ENCODE measurements at regions of chr20 and their contacts with region 1.

Region 1: DNA sequence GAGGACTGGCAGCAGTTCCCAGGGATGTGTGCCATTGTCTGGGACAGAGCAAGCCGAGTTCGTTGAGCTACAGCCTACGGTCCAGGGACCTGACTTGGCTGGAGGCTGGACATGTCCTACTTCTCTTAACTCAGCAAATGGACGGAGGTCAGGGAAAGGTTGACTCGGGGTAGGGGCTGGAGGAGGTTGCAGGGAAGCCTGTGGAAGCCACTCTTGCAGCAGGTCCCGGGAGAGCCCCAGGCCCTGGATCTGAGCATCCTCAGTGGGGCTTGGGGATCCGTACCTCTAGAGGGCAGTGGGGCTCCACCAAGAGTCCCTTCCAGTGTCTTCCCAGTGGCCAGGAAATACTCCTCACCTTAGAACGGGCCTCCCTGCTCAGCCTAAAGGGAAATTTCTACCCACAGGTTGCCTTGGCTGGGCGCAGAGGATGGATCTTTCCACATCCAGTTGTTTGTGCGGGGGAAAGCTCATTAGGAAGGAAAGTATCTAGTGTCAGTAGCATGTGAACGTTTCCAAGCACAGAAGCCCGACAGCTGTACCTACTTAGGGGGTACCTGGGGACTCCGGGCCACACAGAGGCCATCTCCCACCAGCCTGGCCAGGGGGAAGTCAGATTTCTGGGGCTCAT is 170.2 kb downstream of the NFATC2 start:
- DNase-seq: peak; percentile 69
- ATAC-seq: peak; percentile 68
- H3K4me3 ChIP-seq: no peak overlapping the region
- H3K4me3 Mint-ChIP-seq: no peak overlapping the region
- H3K27ac ChIP-seq: no peak overlapping the region
- H3K27ac Mint-ChIP-seq: no peak overlapping the region
- H3K4me1 ChIP-seq: peaks cover 0 to 6% of the 10 kb centered on the region in 2 donors
- H3K4me1 Mint-ChIP-seq: peaks cover 3% of the 10 kb centered on the region
- H3K27me3 ChIP-seq: peaks cover 0 to 4% (median 0%) of the 10 kb centered on the region in 4 experiments
- H3K27me3 Mint-ChIP-seq: peaks cover 5% of the 10 kb centered on the region
- CTCF ChIP-seq: peak; percentile 75

Region 2: GRCh38 chr20:51450221-51450712 is 78.0 kb after region 1 on chr20:
- CTCF ChIA-PET with region 1: no interaction called
- POLR2A ChIA-PET with region 1: no interaction called
- intact Hi-C with region 1: no loop called
- DNase-seq: no peak
- ATAC-seq: no peak
- H3K4me3 ChIP-seq: no peak overlapping the region
- H3K4me3 Mint-ChIP-seq: no peak overlapping the region
- H3K27ac ChIP-seq: no peak overlapping the region
- H3K27ac Mint-ChIP-seq: no peak overlapping the region
- H3K4me1 ChIP-seq: no peaks in the 10 kb centered on the region
- H3K4me1 Mint-ChIP-seq: peaks cover 11% of the 10 kb centered on the region
- H3K27me3 ChIP-seq: no peaks in the 10 kb centered on the region
- H3K27me3 Mint-ChIP-seq: no peaks in the 10 kb centered on the region
- CTCF ChIP-seq: no peak

Region 3: GRCh38 chr20:51624157-51624731 is 252.0 kb after region 1 on chr20:
- CTCF ChIA-PET with region 1: interaction called, 89 read pairs
- POLR2A ChIA-PET with region 1: no interaction called
- intact Hi-C with region 1: loop called (anchors 1 kb)
- DNase-seq: peak; percentile 72
- ATAC-seq: peak; percentile 67
- H3K4me3 ChIP-seq: no peak overlapping the region
- H3K4me3 Mint-ChIP-seq: no peak overlapping the region
- H3K27ac ChIP-seq: no peak overlapping the region
- H3K27ac Mint-ChIP-seq: no peak overlapping the region
- H3K4me1 ChIP-seq: peaks cover 0 to 2% of the 10 kb centered on the region in 2 donors
- H3K4me1 Mint-ChIP-seq: no peaks in the 10 kb centered on the region
- H3K27me3 ChIP-seq: peaks cover 0 to 3% (median 0%) of the 10 kb centered on the region in 4 experiments
- H3K27me3 Mint-ChIP-seq: peaks cover 12% of the 10 kb centered on the region
- CTCF ChIP-seq: peak; percentile 77

Region 4: DNA sequence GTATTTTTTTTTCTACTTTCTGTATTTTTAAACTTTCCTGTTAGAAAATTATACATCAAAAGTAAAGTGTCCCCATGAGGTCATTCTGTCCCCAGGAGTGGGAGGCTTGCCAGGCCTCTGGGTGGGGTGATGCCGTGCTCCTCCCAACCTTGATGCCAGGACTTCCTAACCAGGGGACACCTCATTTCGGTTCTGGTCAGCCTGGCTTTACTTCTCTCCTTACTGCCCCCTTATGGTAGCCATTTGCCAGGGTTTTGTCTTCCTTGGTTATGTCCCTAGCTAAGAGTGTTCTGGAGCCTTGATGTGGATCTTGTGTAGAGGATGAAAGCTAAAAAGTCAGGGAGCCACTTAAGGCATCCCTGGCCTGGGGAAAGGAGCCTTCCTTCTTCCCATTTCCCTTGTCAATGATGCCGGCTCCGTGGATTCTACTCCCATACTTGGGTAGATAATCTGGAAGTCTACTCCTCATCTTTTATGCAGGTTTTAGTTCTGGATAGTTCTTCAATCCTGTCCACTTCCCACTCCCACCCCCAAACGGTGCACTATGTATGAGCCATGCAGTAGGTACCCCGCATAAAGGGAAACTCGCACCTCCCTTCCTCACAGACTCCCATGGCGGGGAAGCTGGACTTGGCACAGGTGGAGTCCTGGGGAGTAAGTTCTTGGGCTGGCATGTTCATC is 594.1 kb after region 1 on chr20:
- CTCF ChIA-PET with region 1: no interaction called
- POLR2A ChIA-PET with region 1: no interaction called
- intact Hi-C with region 1: no loop called
- DNase-seq: peak; percentile 8
- ATAC-seq: no peak
- H3K4me3 ChIP-seq: no peak overlapping the region
- H3K4me3 Mint-ChIP-seq: no peak overlapping the region
- H3K27ac ChIP-seq: no peak overlapping the region
- H3K27ac Mint-ChIP-seq: no peak overlapping the region
- H3K4me1 ChIP-seq: no peaks in the 10 kb centered on the region
- H3K4me1 Mint-ChIP-seq: no peaks in the 10 kb centered on the region
- H3K27me3 ChIP-seq: no peaks in the 10 kb centered on the region
- H3K27me3 Mint-ChIP-seq: peaks cover 3% of the 10 kb centered on the region
- CTCF ChIP-seq: peak; percentile 20

Measured in B cell (primary cell).